ENCODE measurements at regions of chr16 and their contacts with region 1.

Region 1: GRCh38 chr16:67935402-67936123 is 1.1 kb downstream of the PSMB10 start:
- DNase-seq: peak; percentile 89 to 98 (median 94)
- ATAC-seq: peak; percentile 90
- H3K4me3 ChIP-seq: peak overlapping the region; percentile 94 to 100
- H3K4me3 Mint-ChIP-seq: peak overlapping the region; percentile 100
- H3K27ac ChIP-seq: peak overlapping the region; percentile 72 to 73
- H3K27ac Mint-ChIP-seq: peak overlapping the region; percentile 98
- H3K4me1 ChIP-seq: peaks cover 38% of the 10 kb centered on the region
- H3K4me1 Mint-ChIP-seq: peaks cover 37% of the 10 kb centered on the region
- H3K27me3 ChIP-seq: no peaks in the 10 kb centered on the region
- H3K27me3 Mint-ChIP-seq: no peaks in the 10 kb centered on the region
- CTCF ChIP-seq: no peak

Region 2: GRCh38 chr16:67667817-67668494 is 267.6 kb before region 1 on chr16:
- CTCF ChIA-PET with region 1: no interaction called
- POLR2A ChIA-PET with region 1: no interaction called
- intact Hi-C with region 1: loop called in 1 of 2 experiments (anchors 5 kb)
- DNase-seq: peak; percentile 64 to 91 (median 78)
- ATAC-seq: peak; percentile 90
- H3K4me3 ChIP-seq: peak overlapping the region in 1 of 2 experiments; percentile 84
- H3K4me3 Mint-ChIP-seq: peak overlapping the region; percentile 82
- H3K27ac ChIP-seq: peak overlapping the region in 1 of 2 experiments; percentile 38
- H3K27ac Mint-ChIP-seq: no peak overlapping the region
- H3K4me1 ChIP-seq: peaks cover 17% of the 10 kb centered on the region
- H3K4me1 Mint-ChIP-seq: peaks cover 16% of the 10 kb centered on the region
- H3K27me3 ChIP-seq: no peaks in the 10 kb centered on the region
- H3K27me3 Mint-ChIP-seq: no peaks in the 10 kb centered on the region
- CTCF ChIP-seq: peak; percentile 65

Region 3: GRCh38 chr16:67816240-67817031 is 119.1 kb before region 1 on chr16:
- CTCF ChIA-PET with region 1: interaction called, 22 read pairs
- POLR2A ChIA-PET with region 1: no interaction called
- intact Hi-C with region 1: no loop called
- DNase-seq: peak; percentile 79 to 96 (median 90)
- ATAC-seq: peak; percentile 99
- H3K4me3 ChIP-seq: no peak overlapping the region
- H3K4me3 Mint-ChIP-seq: peak overlapping the region; percentile 66
- H3K27ac ChIP-seq: no peak overlapping the region
- H3K27ac Mint-ChIP-seq: no peak overlapping the region
- H3K4me1 ChIP-seq: peaks cover 4% of the 10 kb centered on the region
- H3K4me1 Mint-ChIP-seq: peaks cover 5% of the 10 kb centered on the region
- H3K27me3 ChIP-seq: no peaks in the 10 kb centered on the region
- H3K27me3 Mint-ChIP-seq: no peaks in the 10 kb centered on the region
- CTCF ChIP-seq: peak; percentile 100

Region 4: DNA sequence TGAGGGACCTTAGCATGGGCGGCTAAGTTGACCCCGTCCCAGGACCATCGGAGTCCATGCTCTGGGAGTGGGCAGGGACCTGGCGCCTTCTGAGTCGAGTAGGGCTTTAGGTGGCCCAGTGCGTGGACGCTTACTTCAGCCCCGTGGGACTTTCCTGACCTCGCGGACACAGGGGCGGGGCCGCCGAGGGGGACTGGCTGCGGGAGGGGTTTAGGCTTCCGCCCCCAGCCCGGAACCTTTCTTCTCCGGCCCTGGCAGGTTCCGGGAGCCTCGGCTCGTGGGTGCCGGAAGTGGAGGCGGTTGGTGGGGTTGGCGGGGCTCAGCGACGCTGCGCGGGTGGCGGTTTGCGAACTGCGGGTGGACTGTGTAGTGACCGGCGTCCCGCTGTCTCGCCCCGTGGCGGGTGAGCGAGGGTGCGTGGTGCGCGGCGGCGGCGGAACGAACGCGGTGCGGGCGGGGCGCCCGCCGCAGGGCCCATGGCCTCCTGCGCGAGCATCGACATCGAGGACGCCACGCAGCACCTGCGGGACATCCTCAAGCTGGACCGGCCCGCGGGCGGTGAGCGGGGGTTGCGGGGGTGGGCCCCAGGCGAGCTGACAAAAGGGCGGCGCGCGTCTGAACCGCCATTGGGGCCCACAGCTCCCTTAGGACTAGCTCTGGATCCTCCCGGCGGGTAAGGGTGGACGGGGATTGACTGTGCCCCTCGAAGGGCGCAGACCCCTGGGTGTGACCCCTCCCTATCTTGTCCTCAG is 62.6 kb before region 1 on chr16 and contains the start of gene EDC4:
- CTCF ChIA-PET with region 1: no interaction called
- POLR2A ChIA-PET with region 1: interaction called, 7 read pairs
- intact Hi-C with region 1: loop called in 1 of 2 experiments (anchors 2 kb)
- DNase-seq: peak; percentile 75 to 94 (median 86)
- ATAC-seq: peak; percentile 92
- H3K4me3 ChIP-seq: peak within 1 kb of the TSS; percentile 87 to 97
- H3K4me3 Mint-ChIP-seq: peak within 1 kb of the TSS; percentile 90
- H3K27ac ChIP-seq: peak within 1 kb of the TSS; percentile 78 to 83
- H3K27ac Mint-ChIP-seq: peak within 1 kb of the TSS; percentile 90
- H3K4me1 ChIP-seq: peaks cover 32% of the 10 kb centered on the region
- H3K4me1 Mint-ChIP-seq: peaks cover 32% of the 10 kb centered on the region
- H3K27me3 ChIP-seq: no peaks in the 10 kb centered on the region
- H3K27me3 Mint-ChIP-seq: no peaks in the 10 kb centered on the region
- CTCF ChIP-seq: no peak
- total RNA-seq, gene EDC4: 154 to 169 TPM

Region 5: DNA sequence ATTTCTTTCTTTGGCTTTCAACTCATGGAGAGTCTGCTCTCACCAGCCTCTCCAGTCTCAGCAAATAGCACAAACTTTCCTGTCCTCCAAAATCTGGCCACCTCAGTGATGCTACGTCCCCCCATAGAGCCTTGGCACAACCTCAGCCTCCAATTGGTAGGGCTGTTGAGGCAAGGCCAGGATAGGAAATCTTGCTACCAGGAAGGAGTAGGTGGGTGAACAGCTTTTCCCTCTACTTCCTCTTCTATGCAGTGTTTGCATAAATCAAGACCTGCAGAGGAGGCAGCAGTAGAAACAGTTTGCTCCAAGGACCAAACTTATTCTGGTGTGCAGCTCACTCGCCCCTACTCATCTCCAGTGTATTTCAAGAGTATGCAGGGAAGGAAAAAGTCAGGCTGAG is 64.4 kb after region 1 on chr16:
- CTCF ChIA-PET with region 1: interaction called, 5 read pairs
- POLR2A ChIA-PET with region 1: interaction called, 19 read pairs
- intact Hi-C with region 1: no loop called
- DNase-seq: peak in 1 of 9 experiments; percentile 34
- ATAC-seq: no peak
- H3K4me3 ChIP-seq: peak overlapping the region; percentile 44 to 48
- H3K4me3 Mint-ChIP-seq: peak overlapping the region; percentile 87
- H3K27ac ChIP-seq: peak overlapping the region; percentile 60 to 73
- H3K27ac Mint-ChIP-seq: peak overlapping the region; percentile 97
- H3K4me1 ChIP-seq: peaks cover 53% of the 10 kb centered on the region
- H3K4me1 Mint-ChIP-seq: peaks cover 64% of the 10 kb centered on the region
- H3K27me3 ChIP-seq: no peaks in the 10 kb centered on the region
- H3K27me3 Mint-ChIP-seq: no peaks in the 10 kb centered on the region
- CTCF ChIP-seq: no peak

Region 6: GRCh38 chr16:68064791-68065365 is 129.3 kb after region 1 on chr16:
- CTCF ChIA-PET with region 1: no interaction called
- POLR2A ChIA-PET with region 1: interaction called, 3 read pairs
- intact Hi-C with region 1: loop called in 1 of 2 experiments (anchors 5 kb)
- DNase-seq: peak; percentile 39 to 86 (median 73)
- ATAC-seq: peak; percentile 82
- H3K4me3 ChIP-seq: no peak overlapping the region
- H3K4me3 Mint-ChIP-seq: no peak overlapping the region
- H3K27ac ChIP-seq: peak overlapping the region in 1 of 2 experiments; percentile 58
- H3K27ac Mint-ChIP-seq: peak overlapping the region; percentile 92
- H3K4me1 ChIP-seq: peaks cover 72% of the 10 kb centered on the region
- H3K4me1 Mint-ChIP-seq: peaks cover 76% of the 10 kb centered on the region
- H3K27me3 ChIP-seq: no peaks in the 10 kb centered on the region
- H3K27me3 Mint-ChIP-seq: no peaks in the 10 kb centered on the region
- CTCF ChIP-seq: peak; percentile 85

Region 7: GRCh38 chr16:69339289-69340108 is 1403.9 kb after region 1 on chr16 and contains the starts of genes COG8 and NIP7:
- CTCF ChIA-PET with region 1: no interaction called
- POLR2A ChIA-PET with region 1: no interaction called
- intact Hi-C with region 1: loop called in 1 of 2 experiments (anchors 10 kb)
- DNase-seq: peak; percentile 82 to 96 (median 91)
- ATAC-seq: peak; percentile 89
- H3K4me3 ChIP-seq: peak within 1 kb of the TSS; percentile 82 to 86
- H3K4me3 Mint-ChIP-seq: peak within 1 kb of the TSS; percentile 100
- H3K27ac ChIP-seq: peak within 1 kb of the TSS; percentile 70 to 85
- H3K27ac Mint-ChIP-seq: peak within 1 kb of the TSS; percentile 98
- H3K4me1 ChIP-seq: peaks cover 26% of the 10 kb centered on the region
- H3K4me1 Mint-ChIP-seq: peaks cover 58% of the 10 kb centered on the region
- H3K27me3 ChIP-seq: no peaks in the 10 kb centered on the region
- H3K27me3 Mint-ChIP-seq: no peaks in the 10 kb centered on the region
- CTCF ChIP-seq: peak; percentile 85
- total RNA-seq, gene COG8: 19.3 to 19.6 TPM
- total RNA-seq, gene NIP7: 44.9 to 50.0 TPM

Measured in CD8-positive, alpha-beta T cell (primary cell).